ENCODE measurements at regions of chr2 and their contacts with region 1.

Region 1: GRCh38 chr2:230798769-230799399 is 65.9 kb upstream of the ITM2C start:
- DNase-seq: no peak
- ATAC-seq: peak; percentile 58

Region 2: GRCh38 chr2:230712443-230713330 is 86.2 kb before region 1 on chr2 and contains the start of gene CAB39:
- intact Hi-C with region 1: loop called (anchors 5 kb)
- DNase-seq: peak; percentile 93
- ATAC-seq: peak; percentile 97
- total RNA-seq, gene CAB39: 80.9 TPM

Measured in Right ventricle myocardium superior (tissue), 1 donor.